ENCODE measurements at regions of chr10 and their contacts with region 1.

Region 1: DNA sequence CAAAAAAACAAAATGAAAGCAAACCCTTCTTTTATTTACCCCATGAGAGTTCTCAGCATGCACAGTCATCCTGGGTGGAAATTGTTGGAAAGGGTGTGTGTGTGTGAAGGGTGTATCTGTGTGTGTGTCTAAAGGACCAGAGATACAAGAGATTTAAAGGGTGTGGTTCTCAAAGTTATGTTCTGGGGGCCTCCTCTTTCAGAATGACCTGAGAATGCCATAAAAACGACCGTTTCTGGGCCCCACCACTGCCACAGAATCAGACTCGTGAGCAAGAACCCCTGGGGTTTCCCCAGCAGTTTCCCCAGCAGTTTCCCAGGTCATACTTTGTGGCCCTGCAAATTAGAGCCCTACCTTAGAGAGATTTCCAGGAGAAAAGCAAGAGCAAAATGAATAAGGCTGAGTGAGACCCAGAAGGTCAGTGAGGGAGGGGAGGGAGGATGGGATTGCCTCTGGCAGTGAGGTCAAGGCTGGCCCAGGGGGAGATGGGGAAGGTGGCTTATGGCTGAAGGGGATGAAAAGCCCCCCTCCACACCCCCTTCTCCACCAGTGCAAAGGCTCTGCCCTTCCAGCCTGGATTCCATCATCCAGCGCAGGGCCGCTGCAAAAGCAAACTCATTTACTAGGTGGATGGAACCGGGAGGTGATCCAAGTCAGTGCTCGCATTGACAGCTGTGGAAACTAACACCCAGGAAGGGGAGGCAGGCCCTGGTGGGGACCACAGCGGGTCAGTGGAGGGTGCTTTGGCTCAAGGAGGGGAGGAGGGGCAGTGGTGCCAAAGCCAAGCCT is 10.2 kb downstream of the PYROXD2 start:
- DNase-seq: peak; percentile 60
- H3K4me3 Mint-ChIP-seq: no peak overlapping the region
- H3K27ac Mint-ChIP-seq: peak overlapping the region; percentile 67
- H3K4me1 Mint-ChIP-seq: peaks cover 17% of the 10 kb centered on the region
- H3K27me3 Mint-ChIP-seq: no peaks in the 10 kb centered on the region

Region 2: DNA sequence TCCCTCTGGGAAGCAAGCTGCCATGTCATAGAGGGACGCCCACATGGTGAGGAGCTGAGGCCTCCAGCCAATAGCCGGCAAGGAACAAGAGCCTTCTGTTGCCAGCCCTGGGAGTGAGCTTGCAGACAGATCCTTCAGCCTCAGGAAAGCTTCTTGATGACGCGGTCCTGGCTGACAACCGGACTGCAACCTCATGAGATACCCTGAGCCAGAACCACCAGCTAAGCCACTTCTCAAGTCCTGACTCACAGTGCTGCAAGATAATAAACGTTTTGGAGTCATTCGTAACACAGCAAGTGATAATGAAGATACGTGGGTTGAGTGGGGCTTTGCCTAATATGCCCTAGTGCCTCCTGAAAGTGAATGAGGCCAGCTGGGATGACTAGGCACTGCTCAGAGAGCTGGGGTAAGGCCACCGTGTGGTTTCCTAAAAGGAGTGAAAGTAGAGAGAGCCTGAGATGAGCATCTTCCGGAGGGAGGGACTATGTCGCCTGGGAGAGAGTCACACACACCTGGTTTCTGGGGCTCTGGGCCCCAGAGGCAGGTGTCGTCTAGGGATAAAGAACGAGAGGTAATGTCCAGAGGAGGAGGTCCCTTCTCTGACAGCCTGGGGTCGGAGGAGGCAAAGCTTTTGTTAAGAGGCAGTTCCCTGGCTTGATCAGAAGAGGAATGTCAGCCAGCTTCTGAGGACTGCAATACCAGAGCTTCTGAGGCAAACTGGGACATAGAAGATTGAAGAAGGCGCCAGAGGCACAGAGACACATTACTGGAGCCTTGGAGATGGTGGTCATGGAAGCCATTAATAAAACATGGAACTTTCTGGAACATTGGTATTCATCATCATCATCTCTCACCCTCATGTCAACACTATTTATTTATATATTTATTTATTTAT is 43.4 kb before region 1 on chr10:
- CTCF ChIA-PET with region 1: no interaction called
- POLR2A ChIA-PET with region 1: no interaction called
- intact Hi-C with region 1: loop called (anchors 1 kb)
- DNase-seq: peak; percentile 72
- H3K4me3 Mint-ChIP-seq: no peak overlapping the region
- H3K27ac Mint-ChIP-seq: no peak overlapping the region
- H3K4me1 Mint-ChIP-seq: peaks cover 4% of the 10 kb centered on the region
- H3K27me3 Mint-ChIP-seq: peaks cover 12% of the 10 kb centered on the region

Region 3: DNA sequence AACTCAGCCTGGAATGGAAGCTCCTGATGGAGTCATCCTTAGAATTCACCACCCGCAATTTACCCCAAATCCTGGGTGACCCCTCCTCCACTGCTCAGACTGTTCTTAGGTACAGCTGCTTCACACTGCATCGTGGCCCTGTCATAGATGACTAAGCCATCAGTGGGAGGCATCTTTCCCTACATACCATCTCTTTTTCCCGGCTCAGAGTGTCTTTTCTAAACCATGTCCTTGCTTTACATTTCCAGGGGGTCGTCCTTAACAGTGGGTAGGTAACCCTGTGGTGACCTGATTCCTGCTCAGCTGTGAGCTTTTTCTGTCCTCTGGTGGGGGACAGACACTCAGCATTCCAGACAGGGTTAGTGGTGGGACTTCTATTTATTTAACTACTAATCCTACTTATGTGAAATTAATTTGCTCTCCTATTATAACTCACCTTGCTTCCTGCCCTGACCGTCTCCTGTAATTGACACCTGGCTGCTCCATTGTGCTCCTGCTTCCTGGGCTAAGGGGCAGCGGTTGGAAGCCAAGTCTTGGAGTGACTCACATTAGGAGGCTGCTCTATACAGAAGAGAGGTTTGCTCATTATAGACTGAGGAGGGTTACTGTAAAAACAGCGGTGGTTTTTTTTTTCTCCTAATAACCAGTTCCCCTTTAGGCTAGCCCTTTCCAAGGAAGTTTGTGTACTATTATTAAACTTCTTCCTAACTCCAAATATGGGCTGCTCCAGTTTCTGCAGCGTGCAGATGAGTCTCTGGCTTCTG is 30.4 kb before region 1 on chr10:
- CTCF ChIA-PET with region 1: no interaction called
- POLR2A ChIA-PET with region 1: no interaction called
- intact Hi-C with region 1: no loop called
- DNase-seq: no peak
- H3K4me3 Mint-ChIP-seq: no peak overlapping the region
- H3K27ac Mint-ChIP-seq: no peak overlapping the region
- H3K4me1 Mint-ChIP-seq: no peaks in the 10 kb centered on the region
- H3K27me3 Mint-ChIP-seq: peaks cover 9% of the 10 kb centered on the region